Heart left ventricle (tissue), 16 donors: ENCODE measurements at regions of chr2 and their contacts with region 1.

Region 1: GRCh38 chr2:71276311-71277146 is 49.6 kb upstream of the PAIP2B start:
- DNase-seq: peak; percentile 91 to 95 (median 94)
- ATAC-seq: peak; percentile 89 to 99 (median 96)
- H3K4me3 ChIP-seq: peak overlapping the region; percentile 37 to 83 (median 64)
- H3K27ac ChIP-seq: peak overlapping the region; percentile 62 to 94 (median 89)
- H3K4me1 ChIP-seq: peaks cover 0 to 40% (median 17%) of the 10 kb centered on the region in 12 donors
- H3K27me3 ChIP-seq: peaks cover 0 to 14% (median 0%) of the 10 kb centered on the region in 9 donors
- CTCF ChIP-seq: peak in 3 of 12 donors; percentile 13 to 15 (median 14)
- POLR2A ChIP-seq: peak; percentile 68 to 94

Region 2: DNA sequence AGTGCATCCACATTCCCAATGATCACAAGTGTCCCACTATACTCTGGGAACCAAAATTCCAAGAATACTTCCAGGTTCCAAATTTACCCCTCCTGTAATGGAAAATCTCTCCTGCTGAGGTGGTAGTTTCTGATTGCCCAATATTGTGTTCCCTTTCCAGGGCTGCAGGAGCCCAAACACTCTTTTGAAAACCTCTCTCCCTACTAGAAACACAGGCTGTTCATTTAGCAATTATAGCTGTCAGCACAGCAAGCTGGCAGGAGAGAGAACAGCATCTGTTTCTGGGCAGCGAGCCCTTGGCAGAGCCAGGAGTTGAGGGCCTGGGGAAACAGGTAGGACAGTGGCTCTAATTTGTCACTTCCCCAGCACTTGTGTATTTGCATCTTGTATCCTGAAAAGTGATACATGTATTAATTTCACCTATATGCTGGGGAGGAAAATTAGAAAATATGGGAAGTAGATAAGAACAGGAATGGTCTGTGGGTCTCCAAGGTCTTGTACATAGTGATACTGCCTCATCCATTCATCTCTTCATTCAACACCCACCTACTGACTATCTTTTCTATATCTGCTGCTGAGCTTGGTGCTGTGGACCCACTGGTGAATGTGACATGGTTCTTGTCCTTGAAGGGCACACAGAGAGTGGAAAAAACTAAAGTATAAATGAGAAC is 32.8 kb before region 1 on chr2:
- intact Hi-C with region 1: loop called in 2 of 10 experiments (anchors 2 to 5 kb)
- DNase-seq: peak in 4 of 5 donors; percentile 68 to 87 (median 80)
- ATAC-seq: peak; percentile 95 to 97 (median 96)
- H3K4me3 ChIP-seq: no peak overlapping the region
- H3K27ac ChIP-seq: peak overlapping the region in 10 of 12 donors; percentile 31 to 79 (median 72)
- H3K4me1 ChIP-seq: peaks cover 0 to 39% (median 7%) of the 10 kb centered on the region in 12 donors
- H3K27me3 ChIP-seq: no peaks in the 10 kb centered on the region
- CTCF ChIP-seq: no peak
- POLR2A ChIP-seq: no peak

Region 3: GRCh38 chr2:71358931-71359671 is 82.6 kb after region 1 on chr2:
- intact Hi-C with region 1: no loop called
- DNase-seq: no peak
- ATAC-seq: peak in 2 of 4 donors; percentile 29 to 34
- H3K4me3 ChIP-seq: no peak overlapping the region
- H3K27ac ChIP-seq: no peak overlapping the region
- H3K4me1 ChIP-seq: peaks cover 0 to 17% (median 2%) of the 10 kb centered on the region in 12 donors
- H3K27me3 ChIP-seq: no peaks in the 10 kb centered on the region
- CTCF ChIP-seq: no peak
- POLR2A ChIP-seq: no peak